Aorta (tissue), 5 donors: ENCODE measurements at regions of chr9 and their contacts with region 1.

Region 1: GRCh38 chr9:114082017-114082762 is 4.1 kb upstream of the AMBP start:
- DNase-seq: peak; percentile 91 to 93
- ATAC-seq: peak; percentile 84
- H3K4me3 ChIP-seq: no peak overlapping the region
- H3K27ac ChIP-seq: no peak overlapping the region
- H3K4me1 ChIP-seq: no peaks in the 10 kb centered on the region
- H3K27me3 ChIP-seq: no peaks in the 10 kb centered on the region

Region 2: DNA sequence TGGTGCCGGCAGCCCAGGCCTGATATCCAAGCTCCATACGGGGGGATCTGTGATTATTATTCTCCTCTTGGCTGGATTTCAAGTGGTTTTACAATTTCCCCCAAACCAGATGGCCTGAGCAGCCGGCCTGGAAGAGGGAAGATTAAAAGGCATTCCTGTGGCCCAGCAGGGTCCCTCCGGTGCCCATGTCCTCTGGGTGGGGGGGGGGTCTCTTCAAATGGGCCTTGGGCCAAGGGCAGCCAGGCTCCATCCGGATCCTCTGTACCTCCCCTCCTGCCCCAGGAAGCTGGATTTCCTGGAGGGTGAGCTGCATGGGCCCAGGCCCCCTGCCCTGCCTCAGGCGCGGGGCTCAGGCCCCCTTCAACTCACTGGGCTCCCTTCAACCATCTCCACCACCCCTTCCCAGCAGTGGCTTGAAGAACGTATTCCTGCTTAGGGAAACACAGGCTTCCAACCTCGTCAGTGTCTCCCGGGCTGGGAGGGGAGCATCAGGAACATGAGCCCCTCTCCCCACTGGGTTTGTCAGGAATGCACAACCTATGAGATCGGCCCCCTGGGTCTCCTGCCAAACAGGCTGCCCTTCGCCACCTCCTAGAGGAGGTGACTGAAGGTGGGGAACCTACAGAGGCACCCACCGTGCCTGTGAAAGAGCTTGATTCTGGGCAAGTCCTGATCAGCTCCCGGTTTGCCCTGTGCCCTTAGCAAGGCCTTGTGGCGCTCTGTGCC is 177.8 kb after region 1 on chr9:
- intact Hi-C with region 1: no loop called
- DNase-seq: no peak
- ATAC-seq: no peak
- H3K4me3 ChIP-seq: no peak overlapping the region
- H3K27ac ChIP-seq: no peak overlapping the region
- H3K4me1 ChIP-seq: no peaks in the 10 kb centered on the region
- H3K27me3 ChIP-seq: no peaks in the 10 kb centered on the region

Region 3: GRCh38 chr9:114291064-114291474 is 208.9 kb after region 1 on chr9:
- intact Hi-C with region 1: loop called in 1 of 2 experiments (anchors 2 kb)
- DNase-seq: peak; percentile 74 to 92
- ATAC-seq: peak; percentile 69
- H3K4me3 ChIP-seq: no peak overlapping the region
- H3K27ac ChIP-seq: no peak overlapping the region
- H3K4me1 ChIP-seq: no peaks in the 10 kb centered on the region
- H3K27me3 ChIP-seq: no peaks in the 10 kb centered on the region